Heart left ventricle (tissue), 16 donors: ENCODE measurements at regions of chr17 and their contacts with region 1.

Region 1: GRCh38 chr17:49723423-49723822 is 15.7 kb upstream of the SLC35B1 start:
- DNase-seq: peak; percentile 77 to 91 (median 86)
- ATAC-seq: peak; percentile 81 to 86 (median 85)
- H3K4me3 ChIP-seq: no peak overlapping the region
- H3K27ac ChIP-seq: peak overlapping the region; percentile 47 to 85 (median 74)
- H3K4me1 ChIP-seq: peaks cover 0 to 57% (median 34%) of the 10 kb centered on the region in 12 donors
- H3K27me3 ChIP-seq: no peaks in the 10 kb centered on the region
- CTCF ChIP-seq: no peak
- POLR2A ChIP-seq: no peak

Region 2: GRCh38 chr17:49523706-49524472 is 199.5 kb before region 1 on chr17:
- intact Hi-C with region 1: no loop called
- DNase-seq: no peak
- ATAC-seq: no peak
- H3K4me3 ChIP-seq: no peak overlapping the region
- H3K27ac ChIP-seq: no peak overlapping the region
- H3K4me1 ChIP-seq: peaks cover 0 to 43% (median 4%) of the 10 kb centered on the region in 12 donors
- H3K27me3 ChIP-seq: peaks cover 0 to 42% (median 0%) of the 10 kb centered on the region in 9 donors
- CTCF ChIP-seq: no peak
- POLR2A ChIP-seq: no peak

Region 3: GRCh38 chr17:49694847-49695683 is 28.4 kb before region 1 on chr17:
- intact Hi-C with region 1: no loop called
- DNase-seq: peak in 3 of 5 donors; percentile 39 to 58 (median 52)
- ATAC-seq: no peak
- H3K4me3 ChIP-seq: peak overlapping the region in 1 of 12 donors; percentile 16
- H3K27ac ChIP-seq: no peak overlapping the region
- H3K4me1 ChIP-seq: peaks cover 0 to 47% (median 26%) of the 10 kb centered on the region in 12 donors
- H3K27me3 ChIP-seq: no peaks in the 10 kb centered on the region
- CTCF ChIP-seq: peak; percentile 81 to 97 (median 92)
- POLR2A ChIP-seq: no peak

Region 4: GRCh38 chr17:49755663-49756283 is 32.4 kb after region 1 on chr17:
- intact Hi-C with region 1: loop called in 4 of 10 experiments (anchors 5 kb)
- DNase-seq: no peak
- ATAC-seq: no peak
- H3K4me3 ChIP-seq: no peak overlapping the region
- H3K27ac ChIP-seq: peak overlapping the region in 1 of 12 donors; percentile 24
- H3K4me1 ChIP-seq: peaks cover 0 to 66% (median 41%) of the 10 kb centered on the region in 12 donors
- H3K27me3 ChIP-seq: no peaks in the 10 kb centered on the region
- CTCF ChIP-seq: no peak
- POLR2A ChIP-seq: no peak

Region 5: GRCh38 chr17:49763735-49764558 is 40.5 kb after region 1 on chr17 and contains the start of gene FAM117A:
- intact Hi-C with region 1: loop called in 6 of 10 experiments (anchors 5 kb)
- DNase-seq: peak; percentile 94 to 97 (median 97)
- ATAC-seq: peak; percentile 99
- H3K4me3 ChIP-seq: peak within 1 kb of the TSS; percentile 67 to 96 (median 74)
- H3K27ac ChIP-seq: peak within 1 kb of the TSS in 11 of 12 donors; percentile 46 to 89 (median 68)
- H3K4me1 ChIP-seq: peaks cover 0 to 45% (median 17%) of the 10 kb centered on the region in 12 donors
- H3K27me3 ChIP-seq: no peaks in the 10 kb centered on the region
- CTCF ChIP-seq: no peak
- POLR2A ChIP-seq: peak in 1 of 2 donors; percentile 66
- total RNA-seq, gene FAM117A: 5.9 to 18.5 (median 14.9) TPM

Region 6: DNA sequence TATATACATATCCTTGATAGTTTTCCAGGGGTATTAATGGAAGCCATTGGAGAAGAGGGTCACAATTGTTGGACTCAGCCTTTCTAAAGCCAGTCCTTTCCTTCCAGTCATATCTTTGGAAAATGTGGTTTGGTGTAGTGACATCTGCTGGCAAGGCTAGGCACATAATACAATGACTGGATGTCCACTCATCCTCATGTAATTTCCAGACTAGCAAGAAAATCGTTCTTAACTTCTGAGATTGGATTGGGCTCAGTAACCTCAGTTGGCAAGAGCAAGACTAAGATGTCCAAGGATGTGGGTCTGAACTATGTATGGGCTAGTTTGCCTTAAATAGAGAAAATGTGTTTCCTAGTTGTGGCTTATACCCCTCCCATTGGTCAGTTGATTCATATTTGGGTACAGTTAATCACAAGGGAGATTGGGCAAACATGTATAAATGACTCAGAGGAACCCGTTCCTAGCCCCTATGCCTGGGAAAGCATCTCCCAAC is 56.4 kb after region 1 on chr17:
- intact Hi-C with region 1: loop called in 2 of 10 experiments (anchors 5 kb)
- DNase-seq: peak in 1 of 5 donors; percentile 36
- ATAC-seq: peak; percentile 28 to 67 (median 56)
- H3K4me3 ChIP-seq: no peak overlapping the region
- H3K27ac ChIP-seq: peak overlapping the region in 4 of 12 donors; percentile 8 to 38 (median 32)
- H3K4me1 ChIP-seq: peaks cover 0 to 58% (median 31%) of the 10 kb centered on the region in 12 donors
- H3K27me3 ChIP-seq: no peaks in the 10 kb centered on the region
- CTCF ChIP-seq: peak; percentile 31 to 74 (median 62)
- POLR2A ChIP-seq: no peak